H1 (cell line): ENCODE measurements at regions of chr1 and their contacts with region 1.

Region 1: DNA sequence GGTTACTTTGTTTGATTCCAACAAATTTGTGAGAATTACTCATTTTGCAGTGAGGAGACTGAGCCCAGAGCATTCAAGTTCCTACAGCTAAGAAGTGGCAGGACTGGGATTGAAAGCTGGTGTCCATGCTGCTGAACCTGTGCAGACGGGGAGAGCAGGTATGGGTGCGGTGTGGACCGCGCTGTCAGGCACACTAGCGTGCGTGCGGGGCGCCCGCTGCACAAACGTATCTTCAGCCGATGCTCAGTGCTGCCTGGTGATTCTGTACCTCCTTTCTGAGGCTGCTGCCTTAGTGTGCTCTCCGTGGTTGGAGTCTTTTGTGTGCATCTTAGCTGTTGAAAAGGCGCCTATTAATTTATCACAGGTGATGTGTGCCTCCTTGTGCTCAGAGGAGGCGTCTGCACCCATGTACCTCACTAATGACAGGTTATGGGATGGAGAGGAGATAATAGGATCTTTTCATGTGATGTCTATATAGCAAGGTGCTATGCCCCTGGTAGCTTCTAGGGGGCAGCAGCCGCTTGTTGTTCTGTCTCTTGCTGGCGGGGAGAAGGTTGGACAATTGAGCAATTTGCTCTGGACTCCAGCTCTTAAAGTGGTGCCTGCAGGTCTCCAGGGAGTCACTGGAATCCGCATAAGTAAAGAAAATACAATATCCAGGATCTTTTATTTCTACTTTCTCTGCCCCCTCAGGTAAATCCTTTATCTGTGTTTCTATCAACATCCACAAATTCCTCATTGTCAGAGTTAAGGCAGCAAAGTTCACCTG is 32.5 kb downstream of the PEX14 start:
- DNase-seq: no peak
- H3K4me3 ChIP-seq: no peak overlapping the region
- H3K27ac ChIP-seq: no peak overlapping the region
- H3K4me1 ChIP-seq: peaks cover 3 to 12% (median 5%) of the 10 kb centered on the region in 4 experiments; a peak in 6 of 7 replicates
- H3K27me3 ChIP-seq: no peaks in the 10 kb centered on the region
- CTCF ChIP-seq: peak; percentile 51 to 89 (median 77)
- EP300 ChIP-seq: no peak
- POLR2A ChIP-seq: no peak
- RAD21 ChIP-seq: peak; percentile 84

Region 2: GRCh38 chr1:10209905-10210810 is 297.1 kb before region 1 on chr1 and contains the start of gene KIF1B:
- CTCF ChIA-PET with region 1: no interaction called
- POLR2A ChIA-PET with region 1: no interaction called
- DNase-seq: peak; percentile 95 to 99
- H3K4me3 ChIP-seq: peak within 1 kb of the TSS; percentile 79 to 95 (median 94)
- H3K27ac ChIP-seq: peak within 1 kb of the TSS; percentile 72
- H3K4me1 ChIP-seq: peaks cover 0 to 4% (median 2%) of the 10 kb centered on the region in 4 experiments; a peak in 4 of 7 replicates
- H3K27me3 ChIP-seq: no peaks in the 10 kb centered on the region
- CTCF ChIP-seq: peak; percentile 65 to 80 (median 79)
- EP300 ChIP-seq: 0 out of 3 replicates have a peak, but pooled peaks of 1 of the 2 experiments have one; percentile 48
- POLR2A ChIP-seq: peak; percentile 60 to 79
- RAD21 ChIP-seq: peak; percentile 43 to 58
- total RNA-seq, gene KIF1B: 73.9 and 74.2 TPM in 2 replicates

Region 3: GRCh38 chr1:10368194-10368593 is 139.1 kb before region 1 on chr1:
- CTCF ChIA-PET with region 1: no interaction called
- POLR2A ChIA-PET with region 1: no interaction called
- DNase-seq: no peak
- H3K4me3 ChIP-seq: no peak overlapping the region
- H3K27ac ChIP-seq: no peak overlapping the region
- H3K4me1 ChIP-seq: no peaks in the 10 kb centered on the region
- H3K27me3 ChIP-seq: no peaks in the 10 kb centered on the region
- CTCF ChIP-seq: no peak
- EP300 ChIP-seq: no peak
- POLR2A ChIP-seq: no peak
- RAD21 ChIP-seq: no peak

Region 4: DNA sequence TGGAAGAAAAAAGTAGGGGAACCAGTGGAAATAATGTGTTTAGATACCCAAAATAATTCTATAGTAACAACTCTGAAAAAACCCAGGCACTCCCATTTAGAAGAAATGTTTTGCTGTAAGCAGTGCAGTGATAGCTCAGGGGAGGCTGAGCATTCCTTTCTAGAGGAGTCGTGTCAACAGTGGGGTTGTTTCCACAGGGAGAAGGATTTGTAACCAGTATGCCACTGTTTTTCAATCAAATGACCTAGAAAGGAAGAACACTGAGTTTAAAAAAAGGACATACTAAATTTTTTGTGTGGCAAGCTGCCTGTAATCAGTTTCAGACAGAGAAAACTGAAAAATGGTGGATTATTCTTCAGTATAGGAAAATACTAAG is 106.0 kb before region 1 on chr1:
- CTCF ChIA-PET with region 1: no interaction called
- POLR2A ChIA-PET with region 1: no interaction called
- DNase-seq: no peak
- H3K4me3 ChIP-seq: no peak overlapping the region
- H3K27ac ChIP-seq: no peak overlapping the region
- H3K4me1 ChIP-seq: peaks cover 0 to 7% (median 5%) of the 10 kb centered on the region in 4 experiments; a peak in 5 of 7 replicates
- H3K27me3 ChIP-seq: no peaks in the 10 kb centered on the region
- CTCF ChIP-seq: no peak
- EP300 ChIP-seq: no peak
- POLR2A ChIP-seq: no peak
- RAD21 ChIP-seq: no peak

Region 5: DNA sequence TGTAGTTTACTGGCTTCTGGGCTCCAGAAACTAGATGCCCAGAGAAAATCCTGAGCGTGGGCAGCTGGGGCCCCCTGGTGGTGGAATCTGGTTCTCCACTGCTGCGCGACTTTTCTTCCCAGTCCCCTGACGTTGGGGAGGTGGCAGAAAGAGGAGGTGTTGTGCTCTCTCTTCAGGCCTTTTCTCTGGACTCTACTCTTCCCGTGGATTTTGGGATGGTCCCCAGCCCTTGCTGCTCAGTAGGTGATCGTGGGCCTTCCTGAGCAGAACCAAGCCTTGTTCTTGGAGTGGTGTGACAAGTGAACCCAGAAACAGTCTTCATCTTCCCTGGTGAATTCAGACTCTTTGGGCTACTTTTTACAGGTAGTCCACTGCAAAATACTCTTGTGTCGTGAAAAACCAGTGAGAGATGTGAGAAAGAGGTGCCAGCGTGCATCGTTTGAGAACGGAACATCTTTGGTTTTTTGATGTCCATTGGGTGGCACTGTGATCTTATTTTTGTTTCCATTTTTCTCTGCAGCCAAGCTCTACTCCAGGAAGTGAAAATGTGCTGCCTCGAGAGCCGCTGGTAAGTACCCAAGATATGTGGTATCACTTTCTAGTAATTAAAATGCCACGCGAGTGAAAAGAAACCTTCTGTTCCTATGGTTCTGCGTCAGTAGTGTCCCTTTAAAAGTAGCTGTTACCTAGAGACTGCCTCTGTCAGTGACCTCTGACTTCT is 12.4 kb before region 1 on chr1:
- CTCF ChIA-PET with region 1: interaction called, 78 read pairs
- POLR2A ChIA-PET with region 1: interaction called, 5 read pairs
- DNase-seq: peak in 1 of 2 experiments; percentile 98
- H3K4me3 ChIP-seq: no peak overlapping the region
- H3K27ac ChIP-seq: no peak overlapping the region
- H3K4me1 ChIP-seq: peaks cover 4 to 6% (median 5%) of the 10 kb centered on the region in 4 experiments; a peak in 5 of 7 replicates
- H3K27me3 ChIP-seq: no peaks in the 10 kb centered on the region
- CTCF ChIP-seq: peak; percentile 82 to 92 (median 91)
- EP300 ChIP-seq: no peak
- POLR2A ChIP-seq: no peak
- RAD21 ChIP-seq: peak; percentile 85

Region 6: GRCh38 chr1:10530281-10530740 is 23.0 kb after region 1 on chr1:
- CTCF ChIA-PET with region 1: interaction called, 58 read pairs
- POLR2A ChIA-PET with region 1: interaction called, 4 read pairs
- DNase-seq: peak; percentile 62 to 85
- H3K4me3 ChIP-seq: peak overlapping the region in 3 of 4 experiments; percentile 4 to 50 (median 14); a peak in 4 of 8 replicates
- H3K27ac ChIP-seq: no peak overlapping the region
- H3K4me1 ChIP-seq: peaks cover 13 to 34% (median 26%) of the 10 kb centered on the region in 4 experiments
- H3K27me3 ChIP-seq: 0 out of 7 replicates have a peak, but pooled peaks cover 0 to 1% (median 0%) of the 10 kb centered on the region in 4 experiments
- CTCF ChIP-seq: peak; percentile 82 to 86 (median 84)
- EP300 ChIP-seq: 0 out of 3 replicates have a peak, but pooled peaks of 1 of the 2 experiments have one; percentile 57
- POLR2A ChIP-seq: no peak
- RAD21 ChIP-seq: peak; percentile 86 to 89

Region 7: GRCh38 chr1:10628685-10629084 is 121.4 kb after region 1 on chr1:
- CTCF ChIA-PET with region 1: interaction called, 10 read pairs
- POLR2A ChIA-PET with region 1: no interaction called
- DNase-seq: no peak
- H3K4me3 ChIP-seq: no peak overlapping the region
- H3K27ac ChIP-seq: no peak overlapping the region
- H3K4me1 ChIP-seq: peaks cover 4 to 24% (median 17%) of the 10 kb centered on the region in 4 experiments
- H3K27me3 ChIP-seq: no peaks in the 10 kb centered on the region
- CTCF ChIP-seq: no peak
- EP300 ChIP-seq: no peak
- POLR2A ChIP-seq: no peak
- RAD21 ChIP-seq: no peak

Region 8: DNA sequence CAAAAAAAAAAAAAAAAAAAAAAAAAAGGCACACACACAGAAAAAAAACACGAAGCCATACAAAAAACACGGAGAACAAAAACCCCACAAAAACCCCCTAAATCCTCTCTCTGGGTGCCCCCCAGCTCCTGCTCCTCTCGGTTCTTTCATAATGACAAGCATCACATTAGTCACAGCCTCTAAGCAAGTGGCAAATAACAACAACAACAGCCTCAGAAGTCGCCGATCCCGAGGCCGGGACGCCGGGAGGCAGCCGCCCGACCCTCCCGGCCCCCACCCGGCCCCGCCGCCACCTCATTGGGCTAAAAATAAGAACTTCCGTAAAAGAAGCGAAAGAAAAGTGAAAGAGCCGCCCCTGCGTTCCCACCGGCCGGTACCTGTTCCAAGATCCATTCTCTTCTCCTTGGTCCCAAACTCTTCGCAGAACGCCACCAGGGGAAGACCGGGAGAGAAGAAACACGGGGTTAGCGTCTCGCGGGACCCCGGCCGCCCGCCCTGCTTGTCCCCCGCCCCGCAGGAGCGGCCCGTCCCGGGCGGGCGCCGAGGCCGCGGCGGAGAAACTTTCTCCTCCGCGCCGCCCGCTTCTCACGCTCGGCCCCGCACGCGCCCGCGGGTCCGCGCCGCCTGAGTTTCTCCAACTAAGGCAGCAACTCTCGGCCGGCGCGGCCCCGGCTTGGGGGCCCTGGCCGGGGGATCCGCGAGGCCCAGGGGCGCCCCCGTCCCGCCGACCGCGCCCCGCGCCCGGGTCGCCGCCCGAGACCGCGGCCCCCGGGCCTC is 186.4 kb after region 1 on chr1:
- CTCF ChIA-PET with region 1: interaction called, 15 read pairs
- POLR2A ChIA-PET with region 1: no interaction called
- DNase-seq: peak in 1 of 2 experiments; percentile 59
- H3K4me3 ChIP-seq: peak overlapping the region; percentile 49 to 82 (median 60)
- H3K27ac ChIP-seq: no peak overlapping the region
- H3K4me1 ChIP-seq: peaks cover 0 to 7% (median 4%) of the 10 kb centered on the region in 4 experiments; a peak in 5 of 7 replicates
- H3K27me3 ChIP-seq: peaks cover 0 to 5% (median 2%) of the 10 kb centered on the region in 4 experiments; a peak in 2 of 7 replicates
- CTCF ChIP-seq: no peak
- EP300 ChIP-seq: no peak
- POLR2A ChIP-seq: no peak
- RAD21 ChIP-seq: no peak

Region 9: DNA sequence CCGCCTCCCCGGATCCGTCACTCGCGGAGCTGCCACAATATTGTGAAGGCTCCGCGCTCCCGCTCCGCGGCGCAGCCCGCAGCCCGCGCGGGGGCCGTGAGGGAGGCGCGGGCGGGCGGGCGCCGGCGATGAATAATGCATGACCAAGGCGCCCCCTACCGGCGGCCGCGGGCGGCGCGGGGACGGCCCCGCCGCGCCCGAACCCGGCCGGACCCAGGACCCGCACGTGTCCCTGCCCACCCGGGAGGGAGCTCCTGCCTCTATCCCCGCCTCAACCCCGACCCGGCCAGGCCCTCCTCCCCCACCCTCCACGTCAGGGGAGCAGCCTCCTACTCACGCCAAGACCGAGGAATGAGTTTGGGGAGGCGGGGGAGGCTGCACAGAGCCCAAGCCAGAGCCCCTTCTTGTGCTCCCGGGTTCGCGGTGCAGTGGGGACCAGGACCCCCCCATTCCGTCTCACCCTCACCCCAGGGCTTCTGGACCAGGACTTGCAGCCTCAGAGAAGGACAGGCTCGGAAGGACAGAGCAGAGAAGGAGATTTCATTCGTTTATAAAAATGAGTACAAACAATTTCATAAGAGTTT is 359.9 kb after region 1 on chr1:
- CTCF ChIA-PET with region 1: interaction called, 11 read pairs
- POLR2A ChIA-PET with region 1: no interaction called
- DNase-seq: peak in 1 of 2 experiments; percentile 90
- H3K4me3 ChIP-seq: peak overlapping the region; percentile 13 to 60 (median 23); a peak in 5 of 8 replicates
- H3K27ac ChIP-seq: no peak overlapping the region
- H3K4me1 ChIP-seq: peaks cover 2 to 14% (median 5%) of the 10 kb centered on the region in 4 experiments; a peak in 6 of 7 replicates
- H3K27me3 ChIP-seq: peaks cover 1 to 29% (median 9%) of the 10 kb centered on the region in 4 experiments; a peak in 6 of 7 replicates
- CTCF ChIP-seq: peak; percentile 56 to 76 (median 71)
- EP300 ChIP-seq: no peak
- POLR2A ChIP-seq: no peak
- RAD21 ChIP-seq: peak; percentile 44 to 85

Region 10: GRCh38 chr1:10909697-10910671 is 402.7 kb after region 1 on chr1:
- CTCF ChIA-PET with region 1: interaction called, 17 read pairs
- POLR2A ChIA-PET with region 1: no interaction called
- DNase-seq: peak in 1 of 2 experiments; percentile 95
- H3K4me3 ChIP-seq: no peak overlapping the region
- H3K27ac ChIP-seq: no peak overlapping the region
- H3K4me1 ChIP-seq: peaks cover 0 to 18% (median 10%) of the 10 kb centered on the region in 4 experiments; a peak in 6 of 7 replicates
- H3K27me3 ChIP-seq: no peaks in the 10 kb centered on the region
- CTCF ChIP-seq: peak; percentile 73 to 84 (median 81)
- EP300 ChIP-seq: no peak
- POLR2A ChIP-seq: no peak
- RAD21 ChIP-seq: peak; percentile 83 to 90